A549 (cell line): ENCODE measurements at regions of chr1 and their contacts with region 1.

Region 1: GRCh38 chr1:84772428-84772943 is 82.2 kb upstream of the SSX2IP start:
- DNase-seq: peak; percentile 54 to 62
- ATAC-seq: peak; percentile 87 to 96
- H3K4me3 ChIP-seq: no peak overlapping the region
- H3K27ac ChIP-seq: no peak overlapping the region
- H3K4me1 ChIP-seq: no peaks in the 10 kb centered on the region
- CTCF ChIP-seq: peak; percentile 75
- EP300 ChIP-seq: no peak
- POLR2A ChIP-seq: no peak
- RAD21 ChIP-seq: peak; percentile 81 to 85

Region 2: DNA sequence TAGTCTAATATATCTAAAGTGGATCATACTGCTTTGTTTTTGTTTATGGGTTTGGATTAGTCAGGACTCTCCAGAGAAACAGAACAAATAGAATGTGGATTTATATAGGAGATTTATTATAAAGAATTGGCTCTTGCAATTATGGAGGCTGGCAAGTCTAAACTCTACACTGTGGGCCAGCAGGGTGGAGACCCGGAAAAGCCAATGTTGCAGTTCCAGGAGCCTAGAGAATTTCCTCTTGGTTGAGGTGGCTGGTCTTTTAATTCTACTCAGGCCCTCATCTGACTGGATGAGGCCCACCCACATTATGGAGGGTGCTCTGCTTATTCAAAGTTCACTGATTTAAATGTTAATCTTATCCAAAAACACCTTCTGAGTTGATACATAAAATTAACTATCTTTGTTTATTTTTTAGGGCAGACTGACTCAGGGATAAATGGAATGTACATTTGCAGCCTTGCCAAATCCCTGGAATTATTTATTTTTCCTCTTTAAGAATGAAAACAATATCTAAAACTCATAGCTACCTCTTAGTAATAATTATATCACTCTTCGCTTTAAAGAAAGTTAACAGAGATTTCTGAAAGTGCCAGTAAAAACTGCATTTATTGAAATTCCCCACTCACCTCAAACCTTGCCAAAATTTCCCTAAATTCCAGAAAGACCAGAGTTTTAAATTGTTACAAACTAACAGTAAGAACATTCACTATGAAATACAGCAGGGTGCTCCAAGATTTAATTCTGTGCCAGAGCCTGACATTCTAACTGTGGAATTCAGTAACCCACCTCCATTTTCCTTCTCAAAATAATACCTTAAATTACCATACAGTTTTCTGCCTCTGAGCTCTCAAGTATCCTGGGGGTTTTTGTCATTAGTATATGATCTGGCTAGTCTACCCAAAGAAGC is 45.6 kb before region 1 on chr1:
- CTCF ChIA-PET with region 1: no interaction called
- POLR2A ChIA-PET with region 1: no interaction called
- DNase-seq: no peak
- ATAC-seq: no peak
- H3K4me3 ChIP-seq: no peak overlapping the region
- H3K27ac ChIP-seq: no peak overlapping the region
- H3K4me1 ChIP-seq: no peaks in the 10 kb centered on the region
- CTCF ChIP-seq: no peak
- EP300 ChIP-seq: no peak
- POLR2A ChIP-seq: no peak
- RAD21 ChIP-seq: no peak

Region 3: GRCh38 chr1:84758968-84759491 is 13.5 kb before region 1 on chr1:
- CTCF ChIA-PET with region 1: interaction called, 14 read pairs
- POLR2A ChIA-PET with region 1: no interaction called
- DNase-seq: no peak
- ATAC-seq: no peak
- H3K4me3 ChIP-seq: no peak overlapping the region
- H3K27ac ChIP-seq: no peak overlapping the region
- H3K4me1 ChIP-seq: no peaks in the 10 kb centered on the region
- CTCF ChIP-seq: no peak
- EP300 ChIP-seq: no peak
- POLR2A ChIP-seq: no peak
- RAD21 ChIP-seq: no peak